PC-3 (cell line): ENCODE measurements at regions of chr3 and their contacts with region 1.

Region 1: GRCh38 chr3:190384241-190384863 is 3.6 kb upstream of the CLDN16 start:
- DNase-seq: peak; percentile 86
- ATAC-seq: peak; percentile 48
- H3K4me3 ChIP-seq: no peak overlapping the region
- H3K27ac ChIP-seq: peak overlapping the region; percentile 96
- H3K4me1 ChIP-seq: peaks cover 67% of the 10 kb centered on the region
- H3K27me3 ChIP-seq: no peaks in the 10 kb centered on the region
- CTCF ChIP-seq: peak; percentile 92

Region 2: GRCh38 chr3:190017521-190018288 is 366.6 kb before region 1 on chr3:
- CTCF ChIA-PET with region 1: no interaction called
- POLR2A ChIA-PET with region 1: no interaction called
- intact Hi-C with region 1: loop called (anchors 5 kb)
- DNase-seq: peak; percentile 90
- ATAC-seq: peak; percentile 74
- H3K4me3 ChIP-seq: peak overlapping the region; percentile 33; the same call in 1 of the 2 replicates
- H3K27ac ChIP-seq: no peak overlapping the region
- H3K4me1 ChIP-seq: peaks cover 28% of the 10 kb centered on the region
- H3K27me3 ChIP-seq: no peaks in the 10 kb centered on the region
- CTCF ChIP-seq: peak; percentile 86

Region 3: GRCh38 chr3:190265796-190266195 is 118.6 kb before region 1 on chr3:
- CTCF ChIA-PET with region 1: no interaction called
- POLR2A ChIA-PET with region 1: no interaction called
- intact Hi-C with region 1: no loop called
- DNase-seq: peak; percentile 89
- ATAC-seq: peak; percentile 92
- H3K4me3 ChIP-seq: no peak overlapping the region
- H3K27ac ChIP-seq: peak overlapping the region; percentile 51
- H3K4me1 ChIP-seq: peaks cover 19% of the 10 kb centered on the region
- H3K27me3 ChIP-seq: no peaks in the 10 kb centered on the region
- CTCF ChIP-seq: no peak

Region 4: DNA sequence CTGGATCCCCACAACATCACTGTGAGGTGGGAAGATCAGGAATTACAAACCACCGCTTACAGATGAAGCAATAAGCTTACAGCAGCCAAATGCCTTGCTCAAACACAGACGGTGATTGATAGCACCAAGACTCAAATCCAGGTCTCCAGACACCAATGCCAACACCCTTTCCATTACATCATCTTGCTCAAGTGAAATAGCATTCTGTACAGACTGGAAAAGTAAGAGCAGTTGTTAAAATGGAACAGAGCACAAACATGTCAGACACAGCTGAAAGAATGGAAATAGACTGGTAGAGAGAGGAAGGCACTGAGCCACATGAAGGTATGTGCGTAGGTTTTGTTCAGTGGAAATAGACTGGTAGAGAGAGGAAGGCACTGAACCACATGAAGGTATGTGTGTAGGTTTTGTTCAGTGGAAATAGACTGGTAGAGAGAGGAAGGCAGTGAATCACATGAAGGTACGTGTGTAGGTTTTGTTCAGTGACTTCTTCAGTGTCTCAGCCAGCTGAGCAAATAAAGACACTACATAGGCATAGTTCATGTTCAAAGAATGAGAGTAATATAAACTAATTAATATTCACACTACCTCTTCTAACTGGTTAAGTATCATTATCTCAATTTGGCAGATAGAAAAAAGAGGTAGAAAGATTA is 77.7 kb before region 1 on chr3:
- CTCF ChIA-PET with region 1: no interaction called
- POLR2A ChIA-PET with region 1: no interaction called
- intact Hi-C with region 1: loop called (anchors 1 kb)
- DNase-seq: peak; percentile 66
- ATAC-seq: peak; percentile 62
- H3K4me3 ChIP-seq: 0 out of 2 replicates have a peak overlapping the region, but pooled peaks have one; percentile 5
- H3K27ac ChIP-seq: peak overlapping the region; percentile 80
- H3K4me1 ChIP-seq: peaks cover 60% of the 10 kb centered on the region
- H3K27me3 ChIP-seq: no peaks in the 10 kb centered on the region
- CTCF ChIP-seq: no peak

Region 5: DNA sequence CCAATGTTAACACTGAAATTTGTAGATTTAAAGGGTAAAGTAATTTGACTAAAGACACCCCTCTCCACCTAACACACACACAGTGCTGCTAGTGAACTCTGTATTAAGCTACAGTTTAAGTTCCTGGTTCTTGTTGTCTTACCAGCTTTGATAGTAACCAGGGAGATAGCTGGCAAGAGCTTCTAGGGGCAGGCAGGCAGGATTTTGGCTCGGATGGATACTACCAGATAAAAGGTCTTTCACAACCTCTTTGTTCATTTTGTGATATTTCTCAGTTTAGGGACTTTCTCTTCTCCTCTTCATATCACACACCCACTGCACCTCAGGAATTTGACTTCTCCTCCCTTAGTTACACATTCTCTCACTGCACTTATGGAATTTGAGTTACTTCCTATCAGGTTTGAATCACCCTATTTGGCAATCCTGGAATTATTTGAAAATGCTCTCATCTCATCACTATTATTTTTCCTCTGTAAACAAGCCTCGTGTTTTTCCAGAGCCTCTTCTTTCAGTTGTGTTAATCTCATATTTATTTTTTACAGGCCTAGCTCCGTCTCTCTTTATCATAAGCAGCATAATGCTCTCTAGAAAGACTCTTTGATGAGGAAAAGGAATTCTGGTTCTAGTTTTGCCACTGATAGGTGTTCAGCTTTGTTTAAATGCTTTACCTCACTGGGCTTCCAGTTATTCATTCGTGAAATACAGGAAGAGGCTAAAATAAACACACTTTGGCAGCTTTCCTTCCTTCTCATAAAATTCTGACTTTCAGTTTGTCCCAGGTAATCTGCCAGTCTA is 39.1 kb before region 1 on chr3:
- CTCF ChIA-PET with region 1: interaction called, 7 read pairs
- POLR2A ChIA-PET with region 1: no interaction called
- intact Hi-C with region 1: loop called (anchors 1 kb)
- DNase-seq: peak; percentile 95
- ATAC-seq: peak; percentile 90
- H3K4me3 ChIP-seq: peak overlapping the region; percentile 65
- H3K27ac ChIP-seq: peak overlapping the region; percentile 94
- H3K4me1 ChIP-seq: peaks cover 28% of the 10 kb centered on the region
- H3K27me3 ChIP-seq: no peaks in the 10 kb centered on the region
- CTCF ChIP-seq: no peak

Region 6: DNA sequence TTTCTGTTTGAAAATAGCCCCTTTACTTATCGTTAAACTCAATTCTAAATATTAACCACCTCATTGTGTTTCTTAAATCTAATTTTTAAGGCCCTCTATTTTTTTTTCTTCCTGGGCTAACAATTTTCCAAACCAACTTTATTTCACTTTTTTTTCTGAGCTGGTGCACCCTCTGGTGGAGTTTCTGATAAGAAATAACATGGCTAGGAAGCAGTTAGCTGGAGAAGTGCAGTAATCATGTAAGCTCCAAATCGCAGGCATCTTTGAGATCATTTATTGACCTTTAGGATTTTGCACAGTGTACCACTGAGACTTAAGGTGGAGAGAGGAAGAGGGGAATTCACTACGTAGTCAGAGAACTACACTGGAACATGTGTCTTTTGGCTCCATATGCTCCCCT is 58.9 kb after region 1 on chr3:
- CTCF ChIA-PET with region 1: interaction called, 4 read pairs
- POLR2A ChIA-PET with region 1: interaction called, 3 read pairs
- intact Hi-C with region 1: loop called (anchors 1 kb)
- DNase-seq: peak; percentile 51
- ATAC-seq: peak; percentile 46
- H3K4me3 ChIP-seq: no peak overlapping the region
- H3K27ac ChIP-seq: no peak overlapping the region
- H3K4me1 ChIP-seq: peaks cover 14% of the 10 kb centered on the region; the same call in 1 of the 2 replicates
- H3K27me3 ChIP-seq: no peaks in the 10 kb centered on the region
- CTCF ChIP-seq: peak; percentile 78

Region 7: GRCh38 chr3:190701096-190701532 is 316.8 kb after region 1 on chr3:
- CTCF ChIA-PET with region 1: interaction called, 9 read pairs
- POLR2A ChIA-PET with region 1: no interaction called
- intact Hi-C with region 1: loop called (anchors 1 kb)
- DNase-seq: peak; percentile 87
- ATAC-seq: peak; percentile 93
- H3K4me3 ChIP-seq: no peak overlapping the region
- H3K27ac ChIP-seq: no peak overlapping the region
- H3K4me1 ChIP-seq: peaks cover 19% of the 10 kb centered on the region
- H3K27me3 ChIP-seq: no peaks in the 10 kb centered on the region
- CTCF ChIP-seq: peak; percentile 95

Region 8: GRCh38 chr3:190983875-190984274 is 599.5 kb after region 1 on chr3:
- CTCF ChIA-PET with region 1: no interaction called
- POLR2A ChIA-PET with region 1: no interaction called
- intact Hi-C with region 1: no loop called
- DNase-seq: no peak
- ATAC-seq: peak; percentile 22; the same call in 1 of the 2 replicates
- H3K4me3 ChIP-seq: no peak overlapping the region
- H3K27ac ChIP-seq: no peak overlapping the region
- H3K4me1 ChIP-seq: no peaks in the 10 kb centered on the region
- H3K27me3 ChIP-seq: no peaks in the 10 kb centered on the region
- CTCF ChIP-seq: no peak